Calu3 (cell line): ENCODE measurements at regions of chr5 and their contacts with region 1.

Region 1: GRCh38 chr5:16881251-16881650 is 54.8 kb downstream of the MYO10 start:
- DNase-seq: peak; percentile 22
- H3K4me3 Mint-ChIP-seq: peak overlapping the region; percentile 44
- H3K27ac Mint-ChIP-seq: peak overlapping the region; percentile 54
- H3K4me1 Mint-ChIP-seq: peaks cover 58% of the 10 kb centered on the region
- H3K27me3 Mint-ChIP-seq: no peaks in the 10 kb centered on the region
- CTCF ChIP-seq: no peak

Region 2: DNA sequence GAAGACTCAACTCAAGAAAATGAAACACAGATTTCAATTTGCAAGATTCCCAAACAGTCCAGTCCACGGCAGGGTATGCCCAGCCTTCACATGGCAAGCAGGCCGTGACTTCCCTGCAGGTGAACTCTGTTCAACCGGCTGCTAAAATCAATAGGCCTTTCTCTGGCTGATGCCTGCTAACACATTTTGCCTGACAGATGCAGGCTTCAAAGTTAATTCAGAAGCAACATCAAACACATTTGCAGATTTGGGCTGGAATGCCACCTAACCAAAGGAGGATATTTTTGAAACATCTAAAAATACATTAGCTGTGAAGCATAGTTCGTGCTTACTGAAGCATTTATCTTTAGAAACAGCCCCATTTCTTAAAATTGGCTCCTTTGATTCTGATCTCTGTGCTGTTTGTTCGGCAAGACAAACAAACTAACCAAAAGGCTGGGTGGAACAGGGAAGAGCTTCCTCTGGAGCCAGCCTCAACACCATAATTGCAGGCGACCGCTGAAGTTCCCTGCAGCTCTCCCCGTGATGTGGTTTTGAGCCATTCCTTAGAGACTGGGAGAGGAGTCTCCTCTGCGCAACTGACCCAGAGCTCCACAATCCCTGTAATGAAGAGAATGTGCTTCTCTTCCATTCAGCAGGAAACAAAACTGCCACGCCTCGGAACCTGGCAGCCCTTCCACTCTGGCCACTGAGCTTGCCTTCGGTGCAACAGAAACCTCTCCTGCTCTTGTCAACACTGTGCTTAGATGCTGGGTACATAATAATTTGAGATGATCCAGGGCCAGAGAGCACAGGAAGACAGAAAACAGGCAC is 71.7 kb before region 1 on chr5:
- CTCF ChIA-PET with region 1: no interaction called
- intact Hi-C with region 1: loop called (anchors 5 kb)
- DNase-seq: no peak
- H3K4me3 Mint-ChIP-seq: no peak overlapping the region
- H3K27ac Mint-ChIP-seq: peak overlapping the region; percentile 43
- H3K4me1 Mint-ChIP-seq: peaks cover 53% of the 10 kb centered on the region
- H3K27me3 Mint-ChIP-seq: no peaks in the 10 kb centered on the region
- CTCF ChIP-seq: no peak

Region 3: DNA sequence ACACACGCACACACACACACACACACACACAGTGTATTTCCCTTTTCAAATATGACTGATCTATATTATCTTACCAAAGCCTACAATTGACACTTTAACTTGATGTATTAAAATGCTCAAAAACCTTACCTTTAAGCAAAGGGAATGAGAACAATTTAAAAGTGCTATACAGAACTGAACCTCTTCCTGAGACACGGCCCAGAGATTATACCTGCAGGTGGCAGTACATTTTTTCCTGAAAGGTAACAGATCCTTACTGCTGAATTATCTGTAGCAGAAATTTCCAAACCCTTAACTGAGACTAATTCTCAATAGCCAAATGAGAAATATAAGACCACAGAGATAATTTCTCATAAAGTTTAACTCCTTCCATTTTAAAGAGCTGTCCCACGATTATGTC is 36.3 kb before region 1 on chr5:
- CTCF ChIA-PET with region 1: no interaction called
- intact Hi-C with region 1: loop called (anchors 5 kb)
- DNase-seq: no peak
- H3K4me3 Mint-ChIP-seq: no peak overlapping the region
- H3K27ac Mint-ChIP-seq: no peak overlapping the region
- H3K4me1 Mint-ChIP-seq: peaks cover 18% of the 10 kb centered on the region
- H3K27me3 Mint-ChIP-seq: no peaks in the 10 kb centered on the region
- CTCF ChIP-seq: no peak